Heart left ventricle (tissue), 16 donors: ENCODE measurements at regions of chr3 and their contacts with region 1.

Region 1: GRCh38 chr3:186640473-186640818 is 247 bp downstream of the FETUB start:
- DNase-seq: peak in 1 of 5 donors; percentile 37
- ATAC-seq: peak in 3 of 4 donors; percentile 20 to 44 (median 37)
- H3K4me3 ChIP-seq: no peak overlapping the region
- H3K27ac ChIP-seq: peak overlapping the region in 1 of 12 donors; percentile 10
- H3K4me1 ChIP-seq: peaks cover 0 to 18% (median 5%) of the 10 kb centered on the region in 12 donors
- H3K27me3 ChIP-seq: no peaks in the 10 kb centered on the region
- CTCF ChIP-seq: no peak
- POLR2A ChIP-seq: no peak

Region 2: DNA sequence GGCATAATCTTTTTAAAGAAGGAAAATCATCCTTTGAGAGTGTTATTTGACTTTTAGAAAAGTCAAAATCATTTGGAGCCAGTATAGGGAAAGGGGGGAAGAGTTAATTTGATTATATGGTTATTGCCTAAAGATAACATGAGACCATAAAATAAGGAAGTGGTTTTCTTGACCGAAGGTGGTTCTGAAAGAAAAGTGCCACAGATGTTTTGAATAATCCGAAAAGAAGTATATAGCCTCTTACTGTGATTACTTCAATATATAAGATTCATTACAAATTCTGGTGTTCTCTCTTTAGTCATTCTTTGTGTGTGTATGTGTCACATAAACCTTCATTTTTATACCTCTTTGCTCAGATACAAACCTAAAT is 68.8 kb before region 1 on chr3:
- intact Hi-C with region 1: no loop called
- DNase-seq: no peak
- ATAC-seq: no peak
- H3K4me3 ChIP-seq: peak overlapping the region in 10 of 12 donors; percentile 71 to 99 (median 91)
- H3K27ac ChIP-seq: no peak overlapping the region
- H3K4me1 ChIP-seq: peaks cover 5 to 34% (median 25%) of the 10 kb centered on the region in 12 donors
- H3K27me3 ChIP-seq: no peaks in the 10 kb centered on the region
- CTCF ChIP-seq: no peak
- POLR2A ChIP-seq: no peak

Region 3: GRCh38 chr3:186697510-186697909 is 57.1 kb after region 1 on chr3:
- intact Hi-C with region 1: loop called in 1 of 10 experiments (anchors 2 kb)
- DNase-seq: peak in 4 of 5 donors; percentile 23 to 74 (median 64)
- ATAC-seq: peak; percentile 94 to 96 (median 95)
- H3K4me3 ChIP-seq: no peak overlapping the region
- H3K27ac ChIP-seq: peak overlapping the region in 9 of 12 donors; percentile 39 to 77 (median 67)
- H3K4me1 ChIP-seq: peaks cover 0 to 19% (median 2%) of the 10 kb centered on the region in 12 donors
- H3K27me3 ChIP-seq: no peaks in the 10 kb centered on the region
- CTCF ChIP-seq: no peak
- POLR2A ChIP-seq: no peak

Region 4: GRCh38 chr3:186790261-186790981 is 150.0 kb after region 1 on chr3:
- intact Hi-C with region 1: no loop called
- DNase-seq: no peak
- ATAC-seq: peak in 3 of 4 donors; percentile 16 to 44 (median 33)
- H3K4me3 ChIP-seq: no peak overlapping the region
- H3K27ac ChIP-seq: no peak overlapping the region
- H3K4me1 ChIP-seq: peaks cover 4 to 45% (median 32%) of the 10 kb centered on the region in 12 donors
- H3K27me3 ChIP-seq: no peaks in the 10 kb centered on the region
- CTCF ChIP-seq: no peak
- POLR2A ChIP-seq: no peak